ENCODE measurements at regions of chr1 and their contacts with region 1.

Region 1: DNA sequence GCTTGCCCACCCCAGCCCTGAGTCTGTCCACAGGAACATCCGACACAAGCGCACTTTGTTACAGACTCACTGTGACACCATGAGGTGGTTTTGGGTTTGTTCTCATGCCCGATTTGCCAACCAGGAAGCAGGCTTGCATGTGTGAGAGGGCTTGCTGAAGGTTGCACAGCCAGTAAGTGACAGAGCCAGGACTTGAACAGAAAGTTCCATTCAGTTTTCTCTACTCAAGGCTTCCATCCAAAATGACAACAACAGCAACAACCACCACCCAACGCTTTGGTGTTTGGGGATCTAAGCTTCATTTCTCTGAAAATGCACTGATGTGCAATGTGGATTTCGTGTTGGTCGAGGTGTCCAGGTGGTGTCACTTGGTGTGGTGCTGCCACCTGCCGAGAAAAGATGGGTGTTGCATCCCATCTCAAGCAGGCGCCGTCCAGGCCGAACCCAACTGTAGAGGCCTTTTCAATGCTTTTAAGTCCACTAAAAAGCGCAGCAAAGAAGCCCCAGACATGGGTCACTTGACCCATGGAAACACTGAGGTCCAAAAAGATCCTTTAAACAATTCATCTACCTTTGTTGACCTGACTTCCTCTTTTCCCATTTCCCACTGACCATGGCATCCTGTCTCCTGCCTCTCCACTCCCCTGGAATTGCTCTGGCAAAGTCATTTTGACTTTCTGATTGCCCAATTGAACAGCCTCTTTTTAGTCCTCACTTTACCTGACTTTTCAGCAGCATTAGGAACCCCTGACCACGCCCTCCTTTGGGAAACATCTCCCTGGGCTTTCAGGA is 12.2 kb downstream of the CITED4 start:
- DNase-seq: peak; percentile 68 to 84 (median 76)
- H3K4me3 ChIP-seq: no peak overlapping the region
- H3K27ac ChIP-seq: peak overlapping the region in 6 of 59 donors; percentile 5 to 33 (median 12)
- H3K27me3 ChIP-seq: no peaks in the 10 kb centered on the region
- CTCF ChIP-seq: peak; percentile 71 to 99 (median 95)

Region 2: GRCh38 chr1:40612345-40612831 is 237.6 kb before region 1 on chr1:
- intact Hi-C with region 1: loop called in 1 of 2 experiments (anchors 2 kb)
- DNase-seq: peak in 7 of 10 donors; percentile 54 to 76 (median 64)
- H3K4me3 ChIP-seq: peak overlapping the region in 5 of 59 donors; percentile 8 to 31 (median 21)
- H3K27ac ChIP-seq: peak overlapping the region in 18 of 59 donors; percentile 4 to 77 (median 44)
- H3K27me3 ChIP-seq: no peaks in the 10 kb centered on the region
- CTCF ChIP-seq: peak; percentile 46 to 92 (median 84)

Region 3: GRCh38 chr1:40653851-40654537 is 196.0 kb before region 1 on chr1:
- intact Hi-C with region 1: no loop called
- DNase-seq: no peak
- H3K4me3 ChIP-seq: peak overlapping the region in 33 of 59 donors; percentile 4 to 53 (median 27)
- H3K27ac ChIP-seq: peak overlapping the region in 56 of 59 donors; percentile 33 to 91 (median 74)
- H3K27me3 ChIP-seq: no peaks in the 10 kb centered on the region
- CTCF ChIP-seq: no peak

Region 4: GRCh38 chr1:40691538-40692428 is 158.2 kb before region 1 on chr1 and contains the start of gene NFYC:
- intact Hi-C with region 1: loop called in 1 of 2 experiments (anchors 5 kb)
- DNase-seq: peak; percentile 91 to 97 (median 94)
- H3K4me3 ChIP-seq: peak within 1 kb of the TSS; percentile 70 to 99 (median 91)
- H3K27ac ChIP-seq: peak within 1 kb of the TSS; percentile 96 to 100 (median 100)
- H3K27me3 ChIP-seq: no peaks in the 10 kb centered on the region
- CTCF ChIP-seq: peak in 29 of 56 donors; percentile 7 to 59 (median 28)
- total RNA-seq, gene NFYC: 44.5 to 77.9 (median 59.4) TPM

Region 5: DNA sequence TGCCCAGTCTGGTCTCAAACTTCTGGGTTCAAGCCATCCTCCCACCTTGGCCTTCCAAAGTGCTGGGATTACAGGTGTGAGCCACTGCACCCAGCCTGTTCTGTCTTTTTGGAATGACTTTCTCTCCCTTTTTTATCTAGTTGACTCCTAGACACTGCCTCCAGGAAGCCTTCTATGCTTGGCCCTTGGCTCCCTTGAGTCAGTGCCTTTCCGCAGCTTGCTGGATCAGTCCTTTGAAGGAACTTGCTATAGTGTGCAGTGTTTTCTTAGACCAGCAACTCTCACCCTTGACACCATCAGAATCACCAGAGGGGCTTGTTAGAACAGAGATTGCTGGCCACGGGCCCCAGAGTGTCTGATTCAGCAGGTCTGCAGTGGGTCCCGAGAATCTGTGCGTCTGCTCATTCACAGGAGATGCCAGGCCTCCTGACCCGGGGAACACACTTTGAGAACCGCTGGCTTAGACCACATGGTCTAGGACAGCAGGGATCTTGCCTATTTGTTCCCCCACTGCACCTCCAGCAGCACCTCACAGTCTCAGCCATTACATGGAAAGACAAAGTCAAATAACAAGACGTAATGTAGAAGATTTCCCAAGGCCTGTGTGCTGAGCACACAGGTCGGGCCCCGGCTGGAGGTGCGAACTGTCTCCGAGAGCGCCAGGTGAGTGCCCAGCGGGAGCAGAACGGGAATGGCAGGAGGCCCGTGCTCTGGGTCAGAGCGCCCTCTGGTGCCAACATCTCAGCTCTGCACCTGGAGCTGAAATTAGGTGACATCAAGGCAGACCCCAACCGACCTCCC is 102.1 kb after region 1 on chr1:
- intact Hi-C with region 1: loop called (anchors 1 to 2 kb)
- DNase-seq: peak; percentile 68 to 82 (median 73)
- H3K4me3 ChIP-seq: peak overlapping the region in 14 of 59 donors; percentile 2 to 43 (median 27)
- H3K27ac ChIP-seq: no peak overlapping the region
- H3K27me3 ChIP-seq: peaks cover 0 to 7% (median 0%) of the 10 kb centered on the region in 45 donors
- CTCF ChIP-seq: peak; percentile 62 to 99 (median 94)